ENCODE measurements at regions of chr3 and their contacts with region 1.

Region 1: GRCh38 chr3:50568947-50569749 is at the start of gene HEMK1:
- DNase-seq: peak; percentile 92 to 99 (median 96)

Region 2: DNA sequence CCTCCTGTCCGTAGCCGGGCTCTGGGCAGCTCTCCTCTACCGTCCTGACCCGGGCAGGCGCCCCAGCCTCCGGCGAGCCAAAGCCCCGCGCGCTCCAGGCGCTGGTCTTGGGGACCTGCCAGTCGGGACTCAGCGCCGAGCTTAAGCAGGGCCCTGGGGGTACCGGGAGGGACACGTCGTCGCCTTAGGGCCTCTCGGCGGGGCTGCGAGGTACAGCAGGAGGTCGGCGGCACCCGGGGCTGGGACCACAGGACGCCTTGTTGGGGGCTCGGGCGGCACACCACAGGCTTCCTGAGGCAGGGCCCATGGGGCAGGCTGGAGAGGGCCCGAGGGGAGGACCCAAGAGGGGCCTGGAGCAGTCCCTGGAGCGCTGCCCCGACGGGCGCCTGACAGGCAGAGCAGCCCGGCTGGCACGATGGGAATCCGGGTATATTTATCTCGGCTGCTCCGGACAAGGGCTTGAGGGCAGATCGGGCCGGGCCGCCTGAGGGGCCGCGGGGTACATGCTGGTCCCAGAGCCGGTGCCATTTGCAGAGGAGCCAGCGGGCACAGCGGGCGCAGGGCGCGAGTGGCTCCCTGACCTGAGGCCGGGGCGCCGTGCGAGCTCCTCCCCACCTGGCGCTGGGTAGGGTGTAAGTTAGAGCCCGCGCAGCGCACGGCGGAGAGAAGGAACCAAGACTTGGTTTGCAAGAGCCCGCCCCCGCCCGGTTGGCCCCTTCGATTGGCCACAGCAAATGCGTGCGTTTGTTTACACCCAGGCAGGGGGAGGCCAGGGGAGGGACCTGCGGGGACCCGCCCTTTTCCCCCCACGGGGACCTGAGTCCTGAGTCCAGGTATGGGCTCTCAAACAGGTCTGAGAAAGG is 363.5 kb before region 1 on chr3:
- intact Hi-C with region 1: no loop called
- DNase-seq: peak in 31 of 42 donors; percentile 29 to 73 (median 49)

Region 3: GRCh38 chr3:50364481-50365079 is 204.6 kb before region 1 on chr3:
- intact Hi-C with region 1: loop called (anchors 5 kb)
- DNase-seq: peak in 4 of 42 donors; percentile 14 to 32 (median 20)

Region 4: GRCh38 chr3:51384726-51385473 is 815.8 kb after region 1 on chr3 and contains the start of gene MANF:
- intact Hi-C with region 1: loop called (anchors 5 kb)
- DNase-seq: peak; percentile 94 to 99 (median 98)